MCF 10A (cell line): ENCODE measurements at regions of chr10 and their contacts with region 1.

Region 1: DNA sequence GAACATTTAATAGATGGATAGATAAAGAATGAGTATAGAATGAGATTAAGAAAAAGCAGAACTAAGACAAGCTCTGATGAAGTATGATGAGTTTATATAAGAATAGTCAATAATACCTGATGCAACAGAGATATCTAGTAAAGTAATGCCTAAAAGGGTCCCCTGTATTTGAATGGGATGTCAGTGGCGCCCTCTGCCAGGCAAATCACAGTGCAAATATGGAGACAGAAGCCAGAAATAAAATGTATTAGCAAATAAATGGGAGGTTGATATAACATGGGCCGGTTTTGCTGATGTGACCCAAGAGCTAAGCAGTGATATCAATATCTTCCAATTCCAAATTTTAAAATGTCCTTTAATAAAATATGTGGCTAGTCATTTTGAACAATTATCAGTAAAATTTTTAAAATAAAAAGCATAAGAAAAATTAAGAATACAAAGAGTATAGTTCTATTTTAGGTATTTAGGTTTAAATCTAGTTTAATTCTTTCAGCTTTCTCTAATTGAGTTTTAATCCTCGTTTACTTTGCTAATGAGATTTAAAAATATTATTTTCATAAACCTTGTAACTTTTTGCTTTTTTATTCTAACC is 62.6 kb downstream of the ADK start:
- DNase-seq: peak; percentile 68
- H3K4me3 Mint-ChIP-seq: no peak overlapping the region
- H3K27ac Mint-ChIP-seq: no peak overlapping the region
- H3K4me1 Mint-ChIP-seq: peaks cover 12% of the 10 kb centered on the region
- H3K27me3 Mint-ChIP-seq: no peaks in the 10 kb centered on the region
- CTCF ChIP-seq: peak; percentile 49

Region 2: DNA sequence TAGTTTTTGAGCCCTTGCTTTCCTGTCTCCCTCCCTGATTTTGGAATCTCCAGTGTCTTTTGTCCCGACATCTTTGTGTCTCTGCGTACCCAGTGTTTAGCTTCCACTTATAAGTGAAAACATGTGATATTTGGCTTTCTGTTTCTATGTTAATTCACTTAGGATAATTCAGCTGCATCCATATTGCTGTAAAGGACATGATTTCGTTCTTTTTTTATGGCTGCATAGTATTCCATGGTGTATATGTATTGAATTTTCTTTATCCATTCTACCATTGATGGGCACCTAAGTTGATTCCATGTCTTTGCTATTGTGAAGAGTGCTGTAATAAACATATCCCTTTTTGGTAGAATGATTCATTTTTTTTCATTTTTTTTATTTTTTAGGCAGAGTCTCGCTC is 14.4 kb before region 1 on chr10:
- CTCF ChIA-PET with region 1: interaction called, 14 read pairs
- POLR2A ChIA-PET with region 1: interaction called, 6 read pairs
- intact Hi-C with region 1: no loop called
- DNase-seq: no peak
- H3K4me3 Mint-ChIP-seq: no peak overlapping the region
- H3K27ac Mint-ChIP-seq: no peak overlapping the region
- H3K4me1 Mint-ChIP-seq: peaks cover 11% of the 10 kb centered on the region
- H3K27me3 Mint-ChIP-seq: no peaks in the 10 kb centered on the region
- CTCF ChIP-seq: no peak

Region 3: GRCh38 chr10:74249865-74250264 is 36.2 kb after region 1 on chr10:
- CTCF ChIA-PET with region 1: no interaction called
- POLR2A ChIA-PET with region 1: no interaction called
- intact Hi-C with region 1: no loop called
- DNase-seq: no peak
- H3K4me3 Mint-ChIP-seq: no peak overlapping the region
- H3K27ac Mint-ChIP-seq: no peak overlapping the region
- H3K4me1 Mint-ChIP-seq: peaks cover 9% of the 10 kb centered on the region
- H3K27me3 Mint-ChIP-seq: no peaks in the 10 kb centered on the region
- CTCF ChIP-seq: no peak